ENCODE measurements at regions of chr1 and their contacts with region 1.

Region 1: DNA sequence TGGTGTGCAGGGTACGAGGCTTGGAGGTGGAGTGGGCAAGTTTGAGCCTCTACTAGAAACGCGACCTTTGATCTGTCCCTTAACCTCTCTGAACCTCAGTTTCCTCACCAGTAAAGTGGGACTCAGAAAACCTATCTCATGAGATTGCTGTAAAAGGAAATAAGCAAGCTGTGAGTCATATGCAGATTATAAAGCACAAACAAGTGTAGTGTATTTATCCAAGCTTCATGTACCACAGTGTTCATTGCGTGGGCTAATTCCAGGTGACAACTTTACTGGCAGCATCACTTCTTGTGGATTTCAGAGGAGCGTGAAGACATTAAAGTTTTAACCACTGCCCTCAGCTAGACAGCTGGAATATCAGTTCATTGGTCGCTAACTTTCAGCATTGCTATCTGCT is 44.4 kb downstream of the ZNF697 start:
- DNase-seq: no peak

Region 2: GRCh38 chr1:119549719-119550132 is 54.0 kb before region 1 on chr1:
- intact Hi-C with region 1: loop called (anchors 10 kb)
- DNase-seq: peak; percentile 38 to 88 (median 71)